Dorsolateral prefrontal cortex (tissue), 120 donors: ENCODE measurements at regions of chrX and their contacts with region 1.

Region 1: GRCh38 chrX:51420610-51421009 is 75.8 kb downstream of the NUDT11 start:
- DNase-seq: peak in 1 of 10 donors; percentile 25
- H3K4me3 ChIP-seq: no peak overlapping the region
- H3K27ac ChIP-seq: no peak overlapping the region
- H3K27me3 ChIP-seq: peaks cover 0 to 81% (median 29%) of the 10 kb centered on the region in 45 donors
- CTCF ChIP-seq: peak; percentile 47 to 85 (median 75)

Region 2: DNA sequence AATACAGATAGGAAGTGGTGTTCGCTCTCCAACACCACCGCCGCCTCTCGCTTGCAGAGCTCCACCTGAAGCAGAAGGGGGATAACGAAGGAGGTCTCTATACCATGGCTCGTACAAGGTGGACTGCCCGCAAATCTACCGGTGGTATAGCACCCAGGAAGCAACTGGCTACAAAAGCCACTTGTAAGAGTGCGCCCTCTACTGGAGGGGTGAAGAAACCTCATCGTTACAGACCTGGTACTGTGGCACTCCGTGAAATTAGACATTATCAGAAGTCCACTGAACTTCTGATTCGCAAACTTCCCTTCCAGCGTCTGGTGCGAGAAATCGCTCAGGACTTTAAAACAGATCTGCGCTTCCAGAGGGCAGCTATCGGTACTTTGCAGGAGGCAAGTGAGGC is 515.3 kb before region 1 on chrX:
- intact Hi-C with region 1: no loop called
- DNase-seq: no peak
- H3K4me3 ChIP-seq: no peak overlapping the region
- H3K27ac ChIP-seq: no peak overlapping the region
- H3K27me3 ChIP-seq: peaks cover 0 to 91% (median 34%) of the 10 kb centered on the region in 45 donors
- CTCF ChIP-seq: peak in 10 of 56 donors; percentile 9 to 27 (median 20)

Region 3: GRCh38 chrX:51336584-51336983 is 84.0 kb before region 1 on chrX:
- intact Hi-C with region 1: loop called in 1 of 2 experiments (anchors 10 kb)
- DNase-seq: peak in 2 of 10 donors; percentile 5 to 30
- H3K4me3 ChIP-seq: no peak overlapping the region
- H3K27ac ChIP-seq: no peak overlapping the region
- H3K27me3 ChIP-seq: peaks cover 0 to 74% (median 11%) of the 10 kb centered on the region in 45 donors
- CTCF ChIP-seq: peak; percentile 29 to 74 (median 60)

Region 4: GRCh38 chrX:51459125-51459524 is 38.5 kb after region 1 on chrX:
- intact Hi-C with region 1: loop called in 1 of 2 experiments (anchors 5 kb)
- DNase-seq: no peak
- H3K4me3 ChIP-seq: no peak overlapping the region
- H3K27ac ChIP-seq: no peak overlapping the region
- H3K27me3 ChIP-seq: peaks cover 0 to 82% (median 13%) of the 10 kb centered on the region in 45 donors
- CTCF ChIP-seq: peak in 32 of 56 donors; percentile 11 to 48 (median 28)

Region 5: DNA sequence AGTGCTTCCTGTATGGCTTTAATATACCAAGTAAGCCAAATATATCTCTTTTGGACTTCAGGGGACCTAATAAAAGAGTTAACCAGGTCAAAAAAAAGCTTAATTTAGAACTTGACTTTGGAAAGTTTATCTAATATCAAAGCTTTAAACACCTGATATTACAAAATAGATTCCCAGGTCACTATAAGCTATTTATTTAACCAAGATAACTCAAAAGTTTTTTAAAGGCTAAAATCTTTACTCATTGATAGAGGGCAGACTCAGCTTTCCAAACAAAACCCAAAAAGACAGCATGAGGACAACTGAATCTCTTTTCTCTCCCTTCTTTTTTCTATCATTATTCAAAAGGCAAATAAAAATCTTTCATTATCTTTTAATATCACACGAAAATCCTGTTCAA is 56.3 kb after region 1 on chrX:
- intact Hi-C with region 1: no loop called
- DNase-seq: no peak
- H3K4me3 ChIP-seq: no peak overlapping the region
- H3K27ac ChIP-seq: no peak overlapping the region
- H3K27me3 ChIP-seq: peaks cover 0 to 74% (median 19%) of the 10 kb centered on the region in 45 donors
- CTCF ChIP-seq: no peak

Region 6: GRCh38 chrX:51825436-51825835 is 404.8 kb after region 1 on chrX:
- intact Hi-C with region 1: no loop called
- DNase-seq: no peak
- H3K4me3 ChIP-seq: no peak overlapping the region
- H3K27ac ChIP-seq: no peak overlapping the region
- H3K27me3 ChIP-seq: peaks cover 0 to 48% (median 5%) of the 10 kb centered on the region in 45 donors
- CTCF ChIP-seq: no peak